ENCODE measurements at regions of chr22 and their contacts with region 1.

Region 1: DNA sequence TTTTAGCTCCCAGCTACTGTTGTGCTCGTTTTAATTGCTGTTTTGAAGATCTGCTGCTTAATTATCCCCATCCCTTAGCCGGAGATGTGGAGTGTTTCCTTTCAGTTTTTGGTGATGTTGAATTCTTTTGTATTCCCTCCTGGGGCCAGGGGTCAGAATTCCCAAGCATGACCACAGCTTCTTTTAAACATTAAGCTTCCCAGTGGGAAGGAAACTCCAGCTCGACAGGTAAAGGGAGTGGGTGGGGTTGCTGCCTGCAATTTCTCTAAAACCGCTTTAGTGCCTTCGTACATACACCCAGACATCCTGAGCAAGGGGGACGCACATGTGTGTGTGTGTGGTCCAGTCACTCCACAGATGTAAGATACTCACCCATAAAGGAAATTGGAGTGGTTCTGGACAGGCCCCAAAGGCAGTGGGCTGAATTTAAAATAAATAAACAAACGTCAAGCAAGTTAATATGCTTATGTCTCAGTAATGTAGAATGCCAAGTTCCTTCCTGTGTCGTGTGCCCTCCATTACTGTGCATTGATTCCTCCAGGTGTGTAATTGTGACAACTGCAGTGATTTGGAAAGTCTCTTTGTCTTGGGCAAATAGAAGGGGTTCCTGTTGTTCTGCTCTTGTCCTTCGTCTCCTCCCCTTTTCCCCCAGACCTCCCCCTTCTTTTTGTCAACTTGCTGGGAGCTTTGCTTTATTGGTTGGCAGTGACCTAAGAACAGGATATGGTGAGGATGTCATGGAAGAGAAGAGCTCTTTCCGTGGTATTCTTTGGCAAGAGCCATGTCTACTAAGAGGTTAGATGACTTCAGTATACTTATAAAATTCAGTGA is 19.2 kb upstream of the ADSL start:
- DNase-seq: peak; percentile 23
- H3K4me3 ChIP-seq: no peak overlapping the region
- CTCF ChIP-seq: no peak

Region 2: DNA sequence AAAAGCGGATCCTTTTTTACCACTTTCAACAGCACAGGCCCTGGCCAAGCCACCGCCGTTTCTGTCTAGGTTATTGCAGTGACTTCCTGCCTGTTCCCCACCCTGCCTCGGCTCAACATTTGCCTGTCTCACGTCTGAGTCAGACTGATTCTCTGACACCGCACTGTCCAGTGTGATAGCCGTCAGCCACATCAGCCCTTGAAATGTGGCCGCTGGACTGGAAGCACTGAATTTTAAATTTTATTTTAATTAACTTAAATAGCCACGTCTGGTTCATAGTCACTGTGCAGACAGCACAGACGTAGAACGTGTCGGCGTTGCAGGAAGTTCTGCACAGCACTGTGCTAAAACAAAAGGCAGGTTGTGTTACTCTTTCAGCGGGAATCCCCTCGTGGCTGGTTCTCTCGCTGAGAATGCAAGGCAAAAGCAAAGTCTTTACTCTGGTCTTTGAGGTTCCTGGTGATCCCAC is 37.1 kb before region 1 on chr22:
- in situ Hi-C with region 1: loop called (anchors 5 kb)
- DNase-seq: no peak
- H3K4me3 ChIP-seq: no peak overlapping the region
- CTCF ChIP-seq: no peak

Measured in astrocyte of the cerebellum (primary cell).